Lower leg skin (tissue), 4 donors: ENCODE measurements at regions of chr14 and their contacts with region 1.

Region 1: GRCh38 chr14:91323671-91324605 is 79.4 kb upstream of the GPR68 start:
- DNase-seq: peak; percentile 91 to 98
- H3K4me3 ChIP-seq: no peak overlapping the region
- CTCF ChIP-seq: peak in 2 of 3 donors; percentile 81 to 92
- POLR2A ChIP-seq: no peak

Region 2: GRCh38 chr14:91350813-91351511 is 27.0 kb after region 1 on chr14:
- intact Hi-C with region 1: loop called (anchors 1 kb)
- DNase-seq: no peak
- H3K4me3 ChIP-seq: no peak overlapping the region
- CTCF ChIP-seq: no peak
- POLR2A ChIP-seq: no peak

Region 3: DNA sequence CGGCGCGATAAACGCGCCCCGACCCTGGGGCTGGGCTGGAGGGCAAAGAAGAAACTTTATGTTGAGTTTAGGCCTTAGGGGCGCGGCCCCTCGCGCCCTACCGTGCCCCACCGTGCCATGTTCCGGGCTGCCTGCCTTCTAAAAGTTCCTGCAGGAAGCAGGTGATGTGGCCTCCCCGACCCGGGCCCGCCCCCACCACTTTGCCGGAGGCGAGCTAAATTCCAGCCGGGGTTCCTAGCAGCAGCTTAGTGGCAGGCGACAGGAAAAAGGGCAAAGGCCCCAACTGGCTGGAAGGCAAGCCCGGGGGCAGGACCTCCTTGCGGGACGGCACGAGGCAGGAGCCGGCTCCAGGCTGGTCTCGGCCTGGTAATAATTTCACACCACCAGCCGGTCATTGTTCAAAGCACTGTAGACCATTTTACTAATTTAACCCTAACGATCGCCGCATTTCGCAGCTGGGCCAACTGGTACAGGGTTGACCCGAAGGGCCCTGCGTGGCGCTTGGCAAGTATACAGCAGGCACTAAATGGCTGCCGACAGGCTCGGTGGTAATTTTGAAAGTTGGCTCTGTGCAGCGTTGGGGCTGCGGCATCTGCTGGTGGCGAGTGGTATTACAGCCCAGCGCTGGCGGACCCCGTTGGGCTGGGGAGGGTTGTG is 94.6 kb after region 1 on chr14:
- intact Hi-C with region 1: loop called (anchors 2 kb)
- DNase-seq: peak; percentile 51 to 96
- H3K4me3 ChIP-seq: peak overlapping the region; percentile 54
- CTCF ChIP-seq: peak in 2 of 3 donors; percentile 70 to 95
- POLR2A ChIP-seq: no peak